B cell (primary cell): ENCODE measurements at regions of chr12 and their contacts with region 1.

Region 1: DNA sequence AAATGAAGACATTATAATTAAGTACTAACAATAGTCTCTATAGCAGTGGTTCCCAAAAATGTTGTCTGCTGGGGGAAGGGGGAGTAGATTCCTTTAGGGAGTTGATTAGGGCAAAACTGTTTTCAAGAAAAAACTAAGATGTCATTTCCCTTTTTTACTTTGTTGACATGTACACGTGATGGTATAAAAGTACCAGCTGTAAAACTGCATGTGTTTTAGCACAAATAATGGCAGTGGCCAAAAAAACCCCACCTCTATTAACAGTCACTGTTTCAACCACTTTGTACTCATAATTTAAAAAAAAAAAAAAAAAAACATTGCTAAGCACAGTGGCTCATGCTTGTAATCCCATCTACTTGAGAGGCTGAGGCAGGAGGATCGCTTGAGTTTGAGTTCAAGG is 61.7 kb downstream of the PPP1R12A start:
- DNase-seq: peak; percentile 21
- ATAC-seq: no peak
- H3K4me3 ChIP-seq: no peak overlapping the region
- H3K4me3 Mint-ChIP-seq: no peak overlapping the region
- H3K27ac ChIP-seq: peak overlapping the region in 1 of 2 donors; percentile 47
- H3K27ac Mint-ChIP-seq: peak overlapping the region; percentile 16
- H3K4me1 ChIP-seq: peaks cover 7 to 8% of the 10 kb centered on the region in 2 donors
- H3K4me1 Mint-ChIP-seq: peaks cover 57% of the 10 kb centered on the region
- H3K27me3 ChIP-seq: no peaks in the 10 kb centered on the region
- H3K27me3 Mint-ChIP-seq: no peaks in the 10 kb centered on the region
- CTCF ChIP-seq: no peak

Region 2: GRCh38 chr12:79834712-79835376 is 38.4 kb before region 1 on chr12:
- CTCF ChIA-PET with region 1: no interaction called
- POLR2A ChIA-PET with region 1: no interaction called
- intact Hi-C with region 1: loop called (anchors 5 kb)
- DNase-seq: no peak
- ATAC-seq: no peak
- H3K4me3 ChIP-seq: no peak overlapping the region
- H3K4me3 Mint-ChIP-seq: no peak overlapping the region
- H3K27ac ChIP-seq: no peak overlapping the region
- H3K27ac Mint-ChIP-seq: no peak overlapping the region
- H3K4me1 ChIP-seq: no peaks in the 10 kb centered on the region
- H3K4me1 Mint-ChIP-seq: peaks cover 8% of the 10 kb centered on the region
- H3K27me3 ChIP-seq: no peaks in the 10 kb centered on the region
- H3K27me3 Mint-ChIP-seq: no peaks in the 10 kb centered on the region
- CTCF ChIP-seq: no peak

Region 3: DNA sequence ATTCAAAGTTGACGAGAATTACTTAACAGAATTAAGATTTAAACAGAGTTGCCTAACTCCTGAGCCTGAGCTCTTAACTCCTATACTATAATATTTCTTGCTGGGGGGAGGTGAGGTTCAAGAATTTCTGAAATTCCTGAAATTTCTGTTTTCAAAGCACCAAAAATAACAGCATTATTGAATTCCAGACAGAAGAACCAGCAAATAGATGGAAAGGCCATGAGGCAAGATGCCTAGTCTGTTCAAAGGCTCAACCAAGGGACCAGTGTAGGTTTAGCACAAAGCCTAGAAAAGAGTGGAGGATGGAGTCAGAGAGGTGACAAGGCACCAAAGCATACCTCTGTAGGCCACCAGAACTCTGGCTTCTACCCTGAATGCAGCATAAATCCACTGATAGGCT is 14.7 kb before region 1 on chr12:
- CTCF ChIA-PET with region 1: no interaction called
- POLR2A ChIA-PET with region 1: no interaction called
- intact Hi-C with region 1: no loop called
- DNase-seq: no peak
- ATAC-seq: no peak
- H3K4me3 ChIP-seq: no peak overlapping the region
- H3K4me3 Mint-ChIP-seq: no peak overlapping the region
- H3K27ac ChIP-seq: no peak overlapping the region
- H3K27ac Mint-ChIP-seq: no peak overlapping the region
- H3K4me1 ChIP-seq: no peaks in the 10 kb centered on the region
- H3K4me1 Mint-ChIP-seq: peaks cover 26% of the 10 kb centered on the region
- H3K27me3 ChIP-seq: no peaks in the 10 kb centered on the region
- H3K27me3 Mint-ChIP-seq: no peaks in the 10 kb centered on the region
- CTCF ChIP-seq: no peak

Region 4: DNA sequence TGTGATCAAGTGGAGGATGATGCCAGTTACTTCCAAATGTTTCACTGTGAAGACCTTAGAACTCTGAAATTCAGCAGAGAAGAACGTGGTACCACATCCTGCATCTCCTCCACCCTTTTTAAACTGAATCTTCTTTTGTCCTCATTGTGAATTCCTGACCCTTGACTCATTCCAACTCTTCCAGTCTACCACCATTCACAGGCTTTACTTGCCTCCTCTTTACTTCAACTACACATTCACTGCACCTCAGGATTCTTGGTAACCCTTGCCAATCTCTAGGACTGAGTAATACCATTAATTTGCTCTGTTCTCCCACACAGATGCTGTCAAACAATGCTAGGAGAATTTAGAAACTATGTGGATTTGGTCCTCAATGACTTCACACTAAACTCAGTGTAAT is 24.4 kb after region 1 on chr12:
- CTCF ChIA-PET with region 1: no interaction called
- POLR2A ChIA-PET with region 1: no interaction called
- intact Hi-C with region 1: no loop called
- DNase-seq: no peak
- ATAC-seq: no peak
- H3K4me3 ChIP-seq: no peak overlapping the region
- H3K4me3 Mint-ChIP-seq: no peak overlapping the region
- H3K27ac ChIP-seq: no peak overlapping the region
- H3K27ac Mint-ChIP-seq: no peak overlapping the region
- H3K4me1 ChIP-seq: peaks cover 0 to 2% of the 10 kb centered on the region in 2 donors
- H3K4me1 Mint-ChIP-seq: peaks cover 67% of the 10 kb centered on the region
- H3K27me3 ChIP-seq: no peaks in the 10 kb centered on the region
- H3K27me3 Mint-ChIP-seq: no peaks in the 10 kb centered on the region
- CTCF ChIP-seq: no peak